ENCODE measurements at regions of chr2 and their contacts with region 1.

Region 1: DNA sequence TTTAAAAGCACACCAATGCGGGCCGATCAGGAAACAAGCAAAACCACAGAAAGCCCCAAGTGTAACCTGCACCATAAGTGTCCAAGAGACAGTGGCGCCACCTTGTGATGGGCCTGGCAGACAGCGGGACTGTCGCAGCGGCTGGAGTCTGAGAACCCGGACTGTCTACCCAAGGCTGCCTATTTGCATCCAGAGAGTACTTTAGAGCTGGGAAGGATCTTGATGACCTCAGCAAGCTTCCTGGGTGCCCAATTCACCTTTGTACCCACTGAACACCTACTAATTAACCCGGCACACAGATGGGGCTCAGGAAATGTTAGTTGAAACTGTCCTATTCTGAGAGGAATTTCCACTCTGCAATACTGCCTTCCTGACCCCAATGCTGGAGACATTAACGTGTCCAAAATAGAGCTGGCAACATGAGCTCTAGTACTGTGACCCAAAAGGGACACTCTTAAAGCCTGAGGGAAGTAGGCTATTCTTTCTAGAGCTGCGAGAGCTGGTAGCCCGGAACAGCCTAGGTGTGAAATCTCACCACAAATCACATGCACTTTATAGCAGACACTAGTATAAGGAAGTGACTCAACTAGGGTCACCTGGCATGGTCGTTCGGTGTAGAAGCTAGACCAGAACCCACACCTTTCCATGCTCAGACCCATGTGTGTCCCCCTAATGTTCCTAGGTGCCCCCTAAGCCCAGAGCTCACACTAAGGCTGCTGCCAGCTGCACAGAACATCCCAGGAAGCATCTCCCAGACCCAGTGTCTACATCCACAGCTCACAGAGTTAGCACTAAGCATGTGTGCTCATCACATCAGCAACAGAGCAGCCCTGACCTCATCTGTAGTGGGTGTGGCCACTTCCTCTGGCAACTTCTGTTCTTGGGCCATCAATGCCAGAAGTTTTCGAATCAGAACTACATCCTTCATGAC is 25.4 kb downstream of the POLR1A start:
- DNase-seq: peak; percentile 56 to 82
- ATAC-seq: peak; percentile 87 to 95
- H3K4me3 ChIP-seq: no peak overlapping the region
- H3K27ac ChIP-seq: peak overlapping the region in 1 of 2 experiments; percentile 53; a peak in 3 of 6 replicates
- H3K4me1 ChIP-seq: peaks cover 22% of the 10 kb centered on the region; the same call in 2 of the 3 replicates
- CTCF ChIP-seq: peak; percentile 93
- EP300 ChIP-seq: no peak
- POLR2A ChIP-seq: no peak
- RAD21 ChIP-seq: peak; percentile 86 to 89

Region 2: DNA sequence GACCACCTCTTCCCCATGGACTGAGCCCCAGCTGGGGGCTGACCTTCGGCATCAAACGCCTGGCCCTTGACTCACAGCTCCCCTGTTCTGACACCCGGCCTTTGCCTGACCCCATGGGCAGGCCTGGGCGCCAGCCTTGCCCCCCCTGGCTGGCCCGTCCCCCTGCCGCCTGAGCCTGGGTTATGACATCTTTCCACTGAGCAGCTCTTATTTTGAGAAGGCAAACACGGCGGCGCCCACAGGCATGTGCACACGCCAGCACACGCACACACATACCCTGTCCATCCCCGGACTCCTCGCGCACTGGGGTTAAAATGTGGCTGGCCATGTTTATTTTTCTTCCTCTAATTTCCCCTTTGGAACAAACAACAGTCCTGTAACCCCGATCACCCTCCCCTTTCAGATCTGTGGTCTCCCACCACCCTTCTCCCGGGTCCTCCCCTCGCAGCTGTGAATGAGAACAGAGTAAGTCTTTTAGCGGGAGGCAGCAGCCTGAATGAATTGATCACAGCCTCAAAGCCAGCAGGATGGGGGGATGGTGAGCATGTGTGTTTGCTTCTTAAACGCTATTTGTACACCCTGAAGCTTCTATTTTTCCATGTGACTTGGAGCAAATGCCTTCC is 338.3 kb before region 1 on chr2:
- CTCF ChIA-PET with region 1: interaction called, 26 read pairs
- POLR2A ChIA-PET with region 1: interaction called, 3 read pairs
- DNase-seq: peak; percentile 73 to 92
- ATAC-seq: peak; percentile 81 to 86
- H3K4me3 ChIP-seq: peak overlapping the region; percentile 21; the same call in 2 of the 3 replicates
- H3K27ac ChIP-seq: peak overlapping the region; percentile 93 to 97
- H3K4me1 ChIP-seq: peaks cover 60% of the 10 kb centered on the region
- CTCF ChIP-seq: no peak
- EP300 ChIP-seq: peak; percentile 45 to 89; a peak in 3 of 5 replicates
- POLR2A ChIP-seq: no peak
- RAD21 ChIP-seq: peak in 1 of 2 experiments; percentile 43; a peak in 3 of 5 replicates

Region 3: DNA sequence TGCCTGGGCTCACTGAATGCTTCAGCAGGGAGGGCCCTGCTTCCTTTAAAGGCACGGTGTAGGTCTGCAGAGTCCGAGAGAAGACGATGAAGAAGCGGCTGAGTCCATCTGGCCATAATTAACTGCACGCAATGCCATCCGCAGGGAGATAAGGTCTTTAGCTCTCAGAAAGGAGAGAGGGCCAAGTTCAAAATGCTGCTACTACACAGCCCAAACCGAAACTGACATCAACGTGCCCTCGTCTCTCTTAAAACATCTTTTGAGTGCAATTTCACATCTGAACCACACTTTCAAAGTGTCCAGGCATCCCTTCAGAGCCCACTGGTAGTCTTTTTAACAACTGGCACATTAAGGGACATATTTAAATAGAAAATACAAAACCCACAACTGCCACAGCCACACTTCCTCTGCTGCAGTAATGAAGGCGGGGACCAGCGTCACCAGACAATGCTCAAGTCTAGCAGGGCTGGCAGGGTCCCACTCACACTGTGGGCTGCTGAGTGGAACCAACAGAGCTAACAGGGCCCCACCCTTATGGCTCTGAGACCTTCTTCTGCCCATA is 227.2 kb before region 1 on chr2:
- CTCF ChIA-PET with region 1: interaction called, 24 read pairs
- POLR2A ChIA-PET with region 1: no interaction called
- DNase-seq: no peak
- ATAC-seq: no peak
- H3K4me3 ChIP-seq: no peak overlapping the region
- H3K27ac ChIP-seq: no peak overlapping the region
- H3K4me1 ChIP-seq: no peaks in the 10 kb centered on the region
- CTCF ChIP-seq: no peak
- EP300 ChIP-seq: no peak
- POLR2A ChIP-seq: no peak
- RAD21 ChIP-seq: no peak

Region 4: GRCh38 chr2:85935746-85936208 is 144.5 kb before region 1 on chr2:
- CTCF ChIA-PET with region 1: interaction called, 33 read pairs
- POLR2A ChIA-PET with region 1: no interaction called
- DNase-seq: peak; percentile 87 to 99
- ATAC-seq: peak; percentile 82
- H3K4me3 ChIP-seq: peak overlapping the region; percentile 29
- H3K27ac ChIP-seq: peak overlapping the region; percentile 89 to 99
- H3K4me1 ChIP-seq: peaks cover 68% of the 10 kb centered on the region
- CTCF ChIP-seq: no peak
- EP300 ChIP-seq: peak; percentile 93 to 95; a peak in 4 of 5 replicates
- POLR2A ChIP-seq: no peak
- RAD21 ChIP-seq: peak; percentile 54 to 56

Region 5: DNA sequence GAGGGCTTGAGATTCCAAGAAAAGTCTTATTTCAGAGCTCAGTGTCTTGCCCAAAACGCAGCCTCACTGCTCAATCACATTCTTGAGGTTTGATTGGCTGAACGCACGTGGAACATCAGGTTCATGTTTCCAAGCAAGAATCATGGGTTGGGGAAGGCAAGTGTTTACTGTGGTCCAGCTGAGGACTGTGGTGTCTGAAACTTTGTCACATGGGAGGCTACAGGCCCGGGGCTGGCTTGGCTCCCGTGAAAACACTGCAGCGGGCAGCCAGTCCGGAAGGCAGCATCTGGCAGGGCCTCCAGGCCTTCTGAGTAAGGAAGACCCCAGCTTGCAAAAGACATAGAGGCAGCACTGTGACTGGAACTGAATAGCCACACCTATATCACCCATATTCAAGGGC is 59.3 kb before region 1 on chr2:
- CTCF ChIA-PET with region 1: interaction called, 10 read pairs
- POLR2A ChIA-PET with region 1: no interaction called
- DNase-seq: no peak
- ATAC-seq: peak; percentile 8 to 11; a peak in 3 of 6 replicates
- H3K4me3 ChIP-seq: no peak overlapping the region
- H3K27ac ChIP-seq: peak overlapping the region in 1 of 2 experiments; percentile 30; a peak in 1 of 6 replicates
- H3K4me1 ChIP-seq: peaks cover 15% of the 10 kb centered on the region; the same call in 2 of the 3 replicates
- CTCF ChIP-seq: no peak
- EP300 ChIP-seq: no peak
- POLR2A ChIP-seq: no peak
- RAD21 ChIP-seq: no peak

Region 6: GRCh38 chr2:86097114-86097896 is 17.1 kb after region 1 on chr2:
- CTCF ChIA-PET with region 1: interaction called, 116 read pairs
- POLR2A ChIA-PET with region 1: no interaction called
- DNase-seq: no peak
- ATAC-seq: no peak
- H3K4me3 ChIP-seq: no peak overlapping the region
- H3K27ac ChIP-seq: no peak overlapping the region
- H3K4me1 ChIP-seq: no peaks in the 10 kb centered on the region
- CTCF ChIP-seq: no peak
- EP300 ChIP-seq: no peak
- POLR2A ChIP-seq: no peak
- RAD21 ChIP-seq: no peak

Region 7: GRCh38 chr2:86147793-86148192 is 67.5 kb after region 1 on chr2:
- CTCF ChIA-PET with region 1: no interaction called
- POLR2A ChIA-PET with region 1: no interaction called
- DNase-seq: no peak
- ATAC-seq: no peak
- H3K4me3 ChIP-seq: no peak overlapping the region
- H3K27ac ChIP-seq: no peak overlapping the region
- H3K4me1 ChIP-seq: no peaks in the 10 kb centered on the region
- CTCF ChIP-seq: no peak
- EP300 ChIP-seq: no peak
- POLR2A ChIP-seq: no peak
- RAD21 ChIP-seq: no peak

Region 8: GRCh38 chr2:86195055-86195807 is 115.0 kb after region 1 on chr2 and contains the start of gene IMMT:
- CTCF ChIA-PET with region 1: no interaction called
- POLR2A ChIA-PET with region 1: no interaction called
- DNase-seq: peak; percentile 93 to 99
- ATAC-seq: peak; percentile 92 to 95
- H3K4me3 ChIP-seq: peak within 1 kb of the TSS; percentile 69
- H3K27ac ChIP-seq: peak within 1 kb of the TSS; percentile 93 to 96
- H3K4me1 ChIP-seq: peaks cover 23% of the 10 kb centered on the region
- CTCF ChIP-seq: no peak
- EP300 ChIP-seq: no peak
- POLR2A ChIP-seq: peak; percentile 89
- RAD21 ChIP-seq: no peak
- polyA plus RNA-seq, gene IMMT: 126 and 157 TPM in 2 replicates

Region 9: DNA sequence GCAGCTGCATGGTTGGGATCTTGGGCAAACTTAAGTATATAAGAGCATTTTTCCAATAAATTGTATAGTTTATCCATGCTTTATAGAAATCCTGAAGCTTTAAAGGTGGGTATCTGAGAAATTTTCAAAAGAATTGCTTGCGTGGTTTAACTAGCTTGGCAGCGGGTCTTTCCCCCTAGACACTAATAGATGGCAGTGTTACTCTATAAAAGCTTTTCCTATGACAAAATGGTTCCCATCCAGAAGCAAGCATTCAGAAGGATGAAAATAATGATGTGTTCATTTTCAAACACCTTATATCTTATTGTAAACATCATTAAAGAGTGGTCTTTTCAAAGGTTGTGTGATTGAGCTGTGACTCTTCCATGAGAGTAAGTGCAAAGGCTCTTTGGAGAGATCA is 406.8 kb after region 1 on chr2:
- CTCF ChIA-PET with region 1: no interaction called
- POLR2A ChIA-PET with region 1: no interaction called
- DNase-seq: peak in 1 of 2 experiments; percentile 18
- ATAC-seq: no peak; a peak in 1 of 6 replicates
- H3K4me3 ChIP-seq: no peak overlapping the region
- H3K27ac ChIP-seq: no peak overlapping the region
- H3K4me1 ChIP-seq: no peaks in the 10 kb centered on the region
- CTCF ChIP-seq: peak; percentile 20; the same call in 1 of the 3 replicates
- EP300 ChIP-seq: no peak
- POLR2A ChIP-seq: no peak
- RAD21 ChIP-seq: peak in 1 of 2 experiments; percentile 42; a peak in 2 of 5 replicates

Measured in A549 (cell line).